HepG2 (cell line): ENCODE measurements at regions of chr1 and their contacts with region 1.

Region 1: DNA sequence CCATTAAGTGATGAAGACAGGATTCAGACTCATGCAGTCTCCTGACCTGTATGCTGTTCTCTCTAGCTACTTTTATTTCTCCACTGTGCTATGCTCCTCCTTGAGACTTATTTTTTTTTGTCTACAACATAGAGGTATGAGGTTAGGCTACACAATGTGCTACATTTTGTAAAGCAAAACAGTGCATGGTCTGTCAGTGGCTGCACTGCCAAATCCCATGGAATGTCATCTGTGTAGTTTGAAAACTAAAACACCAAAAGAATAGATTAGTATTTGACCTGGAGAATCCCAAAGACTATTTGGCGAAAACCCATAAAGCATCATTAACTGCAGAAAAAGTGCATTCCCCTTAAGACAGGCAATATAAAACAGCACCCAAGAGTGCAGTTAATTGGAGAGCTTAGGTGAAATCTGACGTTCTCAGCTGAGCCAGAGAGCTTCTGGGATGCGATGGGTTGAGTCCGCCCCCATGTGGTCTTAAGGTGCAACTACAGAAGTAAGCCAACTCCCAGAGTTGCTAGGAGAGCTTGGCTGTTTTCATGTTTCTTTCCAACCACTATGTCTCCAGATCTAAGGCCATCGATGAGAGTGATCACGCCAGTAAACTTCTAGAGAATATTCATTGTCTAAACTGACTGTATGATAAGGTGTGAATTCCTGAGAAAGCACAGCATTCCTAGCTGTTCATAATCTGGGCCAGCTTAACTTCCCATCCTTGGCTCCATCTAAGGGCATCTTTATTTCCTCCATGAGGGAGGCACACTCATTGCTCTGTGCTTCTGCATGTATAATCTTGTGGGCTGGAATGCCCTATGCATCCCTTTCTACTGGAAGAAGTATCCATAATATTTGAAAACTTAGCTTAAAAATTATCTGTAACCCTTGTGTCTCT is 20.7 kb upstream of the CYP2J2 start:
- DNase-seq: peak; percentile 58
- ATAC-seq: peak; percentile 95
- H3K4me3 ChIP-seq: no peak overlapping the region
- H3K27ac ChIP-seq: no peak overlapping the region
- H3K4me1 ChIP-seq: peaks cover 18% of the 10 kb centered on the region
- H3K27me3 ChIP-seq: no peaks in the 10 kb centered on the region
- CTCF ChIP-seq: peak; percentile 96
- EP300 ChIP-seq: no peak
- POLR2A ChIP-seq: no peak
- RAD21 ChIP-seq: peak; percentile 94

Region 2: DNA sequence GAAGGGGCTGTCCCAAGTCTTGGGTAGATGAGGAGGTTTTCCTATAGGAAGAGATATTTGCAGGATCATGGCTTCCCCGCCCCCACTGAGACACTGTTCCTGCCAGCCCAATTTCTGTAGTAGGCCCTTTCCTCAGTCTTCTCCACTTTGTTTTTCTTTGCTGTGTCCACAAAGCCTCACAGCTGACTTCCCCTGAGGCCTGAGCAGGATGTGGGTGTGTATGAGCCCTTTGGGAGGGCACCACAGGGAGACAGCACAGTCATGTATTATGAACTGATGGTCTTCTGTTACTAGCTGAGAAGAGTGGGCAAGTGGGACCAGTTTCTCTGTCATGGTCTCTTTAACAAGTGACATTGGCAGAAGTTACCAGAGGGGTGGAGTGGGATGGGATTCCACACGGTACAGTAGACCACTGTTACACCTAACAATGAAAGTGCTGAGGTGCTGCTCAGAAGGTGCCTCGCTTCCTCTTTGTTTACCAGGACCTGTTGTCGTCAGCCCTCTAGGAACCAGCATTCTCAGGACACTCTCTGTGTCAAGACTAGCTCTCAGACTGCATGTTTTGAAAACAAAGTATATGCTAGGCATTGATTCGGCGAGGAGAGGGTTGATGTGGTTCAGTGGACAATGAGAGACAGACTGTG is 386.4 kb before region 1 on chr1:
- CTCF ChIA-PET with region 1: no interaction called
- POLR2A ChIA-PET with region 1: no interaction called
- in situ Hi-C with region 1: no loop called
- intact Hi-C with region 1: no loop called
- DNase-seq: peak; percentile 54
- ATAC-seq: no peak
- H3K4me3 ChIP-seq: no peak overlapping the region
- H3K27ac ChIP-seq: peak overlapping the region; percentile 27
- H3K4me1 ChIP-seq: peaks cover 47% of the 10 kb centered on the region
- H3K27me3 ChIP-seq: no peaks in the 10 kb centered on the region
- CTCF ChIP-seq: peak; percentile 37
- EP300 ChIP-seq: peak in 1 of 2 experiments; percentile 9; a peak in 1 of 4 replicates
- POLR2A ChIP-seq: no peak
- RAD21 ChIP-seq: no peak

Region 3: GRCh38 chr1:59879574-59879973 is 67.7 kb before region 1 on chr1:
- CTCF ChIA-PET with region 1: interaction called, 27 read pairs
- POLR2A ChIA-PET with region 1: interaction called, 4 read pairs
- in situ Hi-C with region 1: loop called (anchors 5 kb)
- intact Hi-C with region 1: loop called (anchors 1 kb)
- DNase-seq: peak; percentile 65
- ATAC-seq: peak; percentile 98
- H3K4me3 ChIP-seq: no peak overlapping the region
- H3K27ac ChIP-seq: no peak overlapping the region
- H3K4me1 ChIP-seq: peaks cover 9% of the 10 kb centered on the region
- H3K27me3 ChIP-seq: no peaks in the 10 kb centered on the region
- CTCF ChIP-seq: peak; percentile 85
- EP300 ChIP-seq: no peak
- POLR2A ChIP-seq: no peak
- RAD21 ChIP-seq: peak; percentile 61; the same call in 1 of the 2 replicates

Region 4: DNA sequence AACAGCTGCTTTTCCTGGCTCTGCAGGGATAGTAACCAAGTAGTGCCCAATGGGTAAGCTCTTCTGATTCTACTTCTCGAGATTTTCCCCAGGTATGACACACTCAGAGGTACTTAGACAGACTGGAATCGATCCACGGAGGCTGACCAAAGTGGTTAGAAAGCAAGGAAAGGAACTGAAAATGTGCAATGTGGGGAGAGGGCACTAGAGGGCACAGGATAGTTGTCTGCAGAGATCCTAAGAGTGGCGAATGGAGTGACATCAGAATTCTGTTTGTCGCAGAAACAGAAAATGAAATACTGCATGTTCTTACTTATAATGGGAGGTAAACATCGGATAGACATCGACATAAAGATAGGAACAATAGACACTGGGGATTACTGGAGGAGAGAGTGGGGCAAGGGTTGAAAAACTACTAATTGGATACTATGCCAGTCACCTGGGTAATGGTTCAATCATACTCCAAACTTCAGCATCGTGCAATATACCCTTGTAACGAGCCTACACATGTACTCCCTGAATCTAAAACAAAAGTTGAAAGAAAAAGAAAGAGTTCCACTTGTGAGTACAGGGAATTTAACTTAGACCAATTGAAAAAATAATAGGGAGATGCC is 44.0 kb before region 1 on chr1:
- CTCF ChIA-PET with region 1: interaction called, 47 read pairs
- POLR2A ChIA-PET with region 1: interaction called, 4 read pairs
- in situ Hi-C with region 1: loop called (anchors 5 kb)
- intact Hi-C with region 1: loop called (anchors 1 kb)
- DNase-seq: peak; percentile 32
- ATAC-seq: peak; percentile 92
- H3K4me3 ChIP-seq: no peak overlapping the region
- H3K27ac ChIP-seq: no peak overlapping the region
- H3K4me1 ChIP-seq: peaks cover 3% of the 10 kb centered on the region
- H3K27me3 ChIP-seq: no peaks in the 10 kb centered on the region
- CTCF ChIP-seq: peak; percentile 76
- EP300 ChIP-seq: no peak
- POLR2A ChIP-seq: no peak
- RAD21 ChIP-seq: peak; percentile 79

Region 5: DNA sequence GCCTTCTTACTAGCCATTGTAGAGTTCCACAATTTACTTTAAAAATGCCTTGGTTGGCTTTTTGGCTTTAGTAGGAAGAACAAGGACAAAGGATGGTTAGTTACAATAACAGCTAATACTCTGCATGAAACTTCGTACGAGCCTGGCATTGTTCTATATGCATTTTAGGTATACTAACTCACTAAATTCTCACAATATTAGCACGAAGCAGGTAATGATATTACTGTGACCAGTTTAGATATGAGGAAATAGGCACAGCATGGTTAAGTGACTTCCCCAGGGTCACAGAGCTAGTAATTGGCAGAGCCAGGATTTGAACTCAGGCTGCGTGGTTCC is 29.8 kb after region 1 on chr1:
- CTCF ChIA-PET with region 1: no interaction called
- POLR2A ChIA-PET with region 1: no interaction called
- in situ Hi-C with region 1: no loop called
- intact Hi-C with region 1: no loop called
- DNase-seq: no peak
- ATAC-seq: no peak
- H3K4me3 ChIP-seq: no peak overlapping the region
- H3K27ac ChIP-seq: no peak overlapping the region
- H3K4me1 ChIP-seq: peaks cover 14% of the 10 kb centered on the region
- H3K27me3 ChIP-seq: peaks cover 0 to 28% of the 10 kb centered on the region in 2 experiments; a peak in 2 of 5 replicates
- CTCF ChIP-seq: no peak
- EP300 ChIP-seq: no peak
- POLR2A ChIP-seq: no peak
- RAD21 ChIP-seq: no peak

Region 6: GRCh38 chr1:59994302-59995198 is 47.3 kb after region 1 on chr1:
- CTCF ChIA-PET with region 1: no interaction called
- POLR2A ChIA-PET with region 1: no interaction called
- in situ Hi-C with region 1: no loop called
- intact Hi-C with region 1: no loop called
- DNase-seq: no peak
- ATAC-seq: no peak
- H3K4me3 ChIP-seq: no peak overlapping the region
- H3K27ac ChIP-seq: no peak overlapping the region
- H3K4me1 ChIP-seq: no peaks in the 10 kb centered on the region
- H3K27me3 ChIP-seq: no peaks in the 10 kb centered on the region; a peak in 1 of 5 replicates
- CTCF ChIP-seq: no peak
- EP300 ChIP-seq: no peak
- POLR2A ChIP-seq: no peak
- RAD21 ChIP-seq: no peak